Mammary epithelial cell (primary cell): ENCODE measurements at regions of chr21 and their contacts with region 1.

Region 1: GRCh38 chr21:39183237-39184007 is at the start of gene PSMG1:
- DNase-seq: peak; percentile 94
- H3K4me3 ChIP-seq: peak within 1 kb of the TSS; percentile 67 to 93 (median 86)
- H3K27ac ChIP-seq: peak within 1 kb of the TSS; percentile 89
- H3K4me1 ChIP-seq: peaks cover 14% of the 10 kb centered on the region
- H3K27me3 ChIP-seq: no peaks in the 10 kb centered on the region
- CTCF ChIP-seq: no peak
- total RNA-seq, gene PSMG1: 30.7 to 82.7 TPM

Region 2: DNA sequence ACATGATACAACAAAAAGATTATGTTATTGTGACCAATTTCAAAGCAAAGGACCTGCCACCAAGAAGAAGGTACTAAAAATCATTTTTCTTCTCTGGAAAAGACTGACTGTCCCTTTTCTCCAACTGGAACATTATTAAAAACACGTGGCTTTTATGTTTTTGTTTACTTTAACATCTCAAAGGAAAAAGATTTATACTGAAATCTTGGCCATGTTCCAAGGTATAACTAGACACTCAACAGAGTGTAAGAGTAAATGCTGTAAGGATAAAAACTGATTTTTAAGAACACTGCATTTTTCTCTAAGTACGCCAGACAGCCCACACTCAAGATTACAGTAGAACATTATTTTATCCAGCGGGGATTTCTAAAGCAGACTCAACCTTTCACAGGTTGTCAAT is 67.9 kb after region 1 on chr21:
- CTCF ChIA-PET with region 1: no interaction called
- dilution Hi-C with region 1: no loop called
- in situ Hi-C with region 1: no loop called
- intact Hi-C with region 1: loop called (anchors 10 kb)
- DNase-seq: no peak
- H3K4me3 ChIP-seq: no peak overlapping the region
- H3K27ac ChIP-seq: no peak overlapping the region
- H3K4me1 ChIP-seq: no peaks in the 10 kb centered on the region
- H3K27me3 ChIP-seq: no peaks in the 10 kb centered on the region
- CTCF ChIP-seq: no peak

Region 3: GRCh38 chr21:39349211-39350093 is 166.0 kb after region 1 on chr21:
- CTCF ChIA-PET with region 1: no interaction called
- dilution Hi-C with region 1: no loop called
- in situ Hi-C with region 1: no loop called
- intact Hi-C with region 1: loop called (anchors 1 kb)
- DNase-seq: peak; percentile 97
- H3K4me3 ChIP-seq: peak overlapping the region; percentile 63 to 75 (median 64)
- H3K27ac ChIP-seq: peak overlapping the region; percentile 63
- H3K4me1 ChIP-seq: peaks cover 19% of the 10 kb centered on the region
- H3K27me3 ChIP-seq: no peaks in the 10 kb centered on the region
- CTCF ChIP-seq: no peak

Region 4: DNA sequence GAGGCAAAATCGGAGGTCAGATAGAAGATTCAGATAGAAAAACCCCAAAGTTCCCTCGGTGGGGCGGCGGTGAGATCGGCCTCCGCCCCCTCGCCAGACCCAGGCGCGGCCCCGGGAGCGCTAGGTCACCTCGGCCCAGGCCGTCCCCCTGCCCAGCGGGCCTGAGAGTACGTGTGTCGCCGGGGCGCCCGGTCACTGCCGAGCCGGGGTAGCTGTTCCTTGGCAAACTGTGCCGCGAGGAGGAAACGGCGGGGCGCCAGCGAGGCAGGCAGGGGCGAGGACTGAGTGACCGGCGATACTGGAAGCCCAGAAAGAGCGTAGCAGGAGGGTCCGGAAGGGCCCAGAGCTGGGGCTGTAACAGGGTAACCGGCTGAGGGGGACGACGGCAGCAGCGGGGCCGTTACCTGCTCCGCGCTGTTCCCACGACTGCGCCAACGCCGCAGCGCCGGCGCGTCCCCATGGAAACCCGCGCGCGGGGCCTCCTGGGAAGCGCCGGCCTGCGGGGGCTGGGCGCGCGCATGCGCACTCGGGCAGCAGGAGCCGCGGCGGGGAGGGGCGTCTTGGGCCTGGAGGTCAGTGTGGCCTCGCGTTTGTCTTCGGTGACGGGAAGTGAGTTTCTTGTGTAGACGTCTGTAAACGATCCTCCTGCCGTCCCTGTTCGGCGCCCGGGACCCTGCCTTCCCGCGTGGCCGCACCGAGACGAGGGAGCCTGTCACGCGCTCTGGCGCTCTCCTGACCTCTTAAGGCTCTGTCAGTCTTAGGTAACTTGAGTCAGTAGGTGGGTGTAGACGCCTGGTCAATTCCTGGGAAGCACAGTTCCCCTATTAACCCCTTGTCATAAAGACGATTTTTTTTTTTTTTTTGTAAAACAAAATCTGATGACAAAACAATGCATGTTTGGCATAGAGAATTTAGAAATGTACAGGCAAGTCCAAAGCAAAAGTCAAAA is 262.2 kb after region 1 on chr21 and contains the start of gene LCA5L:
- CTCF ChIA-PET with region 1: no interaction called
- dilution Hi-C with region 1: no loop called
- in situ Hi-C with region 1: no loop called
- intact Hi-C with region 1: loop called (anchors 10 kb)
- DNase-seq: peak; percentile 84
- H3K4me3 ChIP-seq: peak within 1 kb of the TSS; percentile 81 to 94 (median 93)
- H3K27ac ChIP-seq: peak within 1 kb of the TSS; percentile 70
- H3K4me1 ChIP-seq: no peaks in the 10 kb centered on the region
- H3K27me3 ChIP-seq: no peaks in the 10 kb centered on the region
- CTCF ChIP-seq: no peak
- total RNA-seq, gene LCA5L: 1.6 to 2.3 TPM

Region 5: DNA sequence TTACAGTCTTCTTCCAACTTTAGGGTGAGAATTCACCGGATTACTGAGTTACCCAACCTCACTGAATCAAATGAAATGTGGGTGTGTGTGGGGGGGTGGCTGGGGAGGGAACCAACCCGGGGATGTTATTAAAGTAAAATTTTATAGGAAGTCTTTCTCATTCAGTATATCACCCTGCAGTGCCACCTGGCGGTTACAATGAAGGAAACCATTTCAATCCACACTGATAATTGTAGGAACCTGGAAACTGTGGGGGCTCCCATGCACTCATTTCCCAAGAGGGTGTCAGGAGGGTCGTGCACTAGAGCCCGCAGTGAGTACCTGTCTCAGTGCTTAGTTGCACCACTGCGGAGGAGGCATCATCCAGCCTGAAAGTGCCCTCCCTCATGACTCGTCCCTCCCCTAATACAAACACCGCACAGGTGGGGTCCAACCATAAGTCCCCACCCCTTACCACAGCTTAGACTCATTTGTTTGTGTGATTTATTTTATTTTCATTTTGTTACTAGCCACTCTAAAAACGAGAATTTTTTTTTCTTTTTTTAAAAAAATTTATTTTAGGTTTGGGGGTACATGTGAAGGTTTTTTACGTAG is 532.5 kb after region 1 on chr21:
- CTCF ChIA-PET with region 1: no interaction called
- dilution Hi-C with region 1: no loop called
- in situ Hi-C with region 1: no loop called
- intact Hi-C with region 1: loop called (anchors 10 kb)
- DNase-seq: peak; percentile 16
- H3K4me3 ChIP-seq: no peak overlapping the region
- H3K27ac ChIP-seq: no peak overlapping the region
- H3K4me1 ChIP-seq: no peaks in the 10 kb centered on the region
- H3K27me3 ChIP-seq: no peaks in the 10 kb centered on the region
- CTCF ChIP-seq: peak; percentile 30 to 62